ENCODE measurements at regions of chr22 and their contacts with region 1.

Region 1: DNA sequence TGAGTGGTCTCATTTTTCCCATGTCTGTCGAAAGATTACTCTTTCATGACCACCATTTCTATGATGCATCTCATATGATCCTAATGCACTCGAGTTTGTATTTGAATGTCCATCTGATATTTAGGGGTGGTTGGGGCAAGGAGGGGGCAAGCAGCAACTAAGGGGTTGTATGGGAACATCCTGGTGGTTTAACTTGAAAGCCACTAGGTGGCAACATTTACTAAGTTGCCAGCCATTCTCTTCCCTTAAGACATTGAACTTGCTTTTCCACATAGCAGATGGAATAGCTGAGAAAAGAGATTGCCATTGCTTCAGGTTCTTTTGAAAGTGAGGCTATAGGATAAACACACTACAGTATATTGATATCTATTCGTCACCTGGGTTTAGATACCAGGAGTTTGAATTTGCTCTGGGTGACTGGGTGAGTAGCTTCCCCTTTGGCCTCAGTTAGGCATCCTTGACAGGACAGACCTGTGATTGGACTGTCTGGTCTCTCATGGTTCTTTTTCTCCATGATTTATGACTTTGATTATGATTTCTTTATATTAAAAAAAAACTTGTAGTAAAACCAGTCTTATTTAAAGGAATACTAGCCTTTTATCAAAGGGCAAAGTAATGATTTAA is 32.4 kb downstream of the NF2 start:
- DNase-seq: no peak
- H3K4me3 ChIP-seq: no peak overlapping the region
- H3K27ac ChIP-seq: no peak overlapping the region
- H3K4me1 ChIP-seq: peaks cover 0 to 22% (median 8%) of the 10 kb centered on the region in 4 donors
- H3K27me3 ChIP-seq: no peaks in the 10 kb centered on the region
- CTCF ChIP-seq: peak in 3 of 4 experiments; percentile 30 to 64 (median 55)
- EP300 ChIP-seq: no peak
- POLR2A ChIP-seq: no peak

Region 2: GRCh38 chr22:29871684-29872083 is 235.8 kb after region 1 on chr22:
- intact Hi-C with region 1: no loop called
- DNase-seq: no peak
- H3K4me3 ChIP-seq: no peak overlapping the region
- H3K27ac ChIP-seq: no peak overlapping the region
- H3K4me1 ChIP-seq: peaks cover 0 to 22% (median 11%) of the 10 kb centered on the region in 4 donors
- H3K27me3 ChIP-seq: no peaks in the 10 kb centered on the region
- CTCF ChIP-seq: no peak
- EP300 ChIP-seq: no peak
- POLR2A ChIP-seq: no peak

Region 3: DNA sequence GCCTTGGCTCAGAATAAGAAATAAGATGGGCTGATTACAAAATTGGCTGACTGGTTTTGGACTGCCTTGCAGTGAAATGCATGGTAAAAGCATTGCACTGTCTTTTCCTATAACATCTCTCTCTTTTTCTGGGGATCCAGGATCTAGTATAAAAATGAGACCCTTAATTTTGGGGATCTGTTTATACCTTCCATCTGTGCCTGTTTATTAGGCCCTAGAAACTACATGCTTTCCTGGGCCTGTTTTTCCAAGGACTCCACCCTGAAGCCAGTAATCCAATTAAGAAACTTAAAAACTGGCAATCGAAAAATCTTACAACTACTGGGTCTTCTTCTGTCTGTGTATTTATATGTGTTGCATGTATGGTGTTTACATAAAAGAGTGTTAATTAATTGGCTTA is 459.0 kb after region 1 on chr22:
- intact Hi-C with region 1: loop called (anchors 5 kb)
- DNase-seq: no peak
- H3K4me3 ChIP-seq: no peak overlapping the region
- H3K27ac ChIP-seq: no peak overlapping the region
- H3K4me1 ChIP-seq: no peaks in the 10 kb centered on the region
- H3K27me3 ChIP-seq: peaks cover 0 to 9% (median 0%) of the 10 kb centered on the region in 3 donors
- CTCF ChIP-seq: no peak
- EP300 ChIP-seq: no peak
- POLR2A ChIP-seq: no peak

Measured in sigmoid colon (tissue), 7 donors.